ENCODE measurements at regions of chr10 and their contacts with region 1.

Region 1: GRCh38 chr10:48981310-48981907 is 41.8 kb upstream of the LRRC18 start:
- DNase-seq: peak in 6 of 10 donors; percentile 20 to 68 (median 48)
- H3K4me3 ChIP-seq: no peak overlapping the region
- H3K27ac ChIP-seq: no peak overlapping the region
- H3K27me3 ChIP-seq: no peaks in the 10 kb centered on the region
- CTCF ChIP-seq: peak; percentile 41 to 91 (median 80)

Region 2: GRCh38 chr10:49115015-49115795 is 133.8 kb after region 1 on chr10 and contains the start of gene VSTM4:
- intact Hi-C with region 1: loop called in 1 of 2 experiments (anchors 2 kb)
- DNase-seq: peak in 5 of 10 donors; percentile 27 to 71 (median 41)
- H3K4me3 ChIP-seq: peak within 1 kb of the TSS; percentile 49 to 83 (median 69)
- H3K27ac ChIP-seq: peak within 1 kb of the TSS in 54 of 59 donors; percentile 1 to 86 (median 72)
- H3K27me3 ChIP-seq: no peaks in the 10 kb centered on the region
- CTCF ChIP-seq: peak in 22 of 56 donors; percentile 7 to 45 (median 16)
- total RNA-seq, gene VSTM4: 7.3 to 17.4 (median 11.3) TPM

Region 3: GRCh38 chr10:49164559-49165188 is 183.3 kb after region 1 on chr10:
- intact Hi-C with region 1: loop called (anchors 5 kb)
- DNase-seq: no peak
- H3K4me3 ChIP-seq: no peak overlapping the region
- H3K27ac ChIP-seq: peak overlapping the region in 4 of 59 donors; percentile 54 to 75 (median 68)
- H3K27me3 ChIP-seq: no peaks in the 10 kb centered on the region
- CTCF ChIP-seq: peak in 52 of 56 donors; percentile 23 to 69 (median 50)

Region 4: GRCh38 chr10:49177391-49178355 is 196.3 kb after region 1 on chr10:
- intact Hi-C with region 1: loop called in 1 of 2 experiments (anchors 5 kb)
- DNase-seq: peak in 5 of 10 donors; percentile 49 to 72 (median 61)
- H3K4me3 ChIP-seq: no peak overlapping the region
- H3K27ac ChIP-seq: peak overlapping the region in 51 of 59 donors; percentile 8 to 86 (median 68)
- H3K27me3 ChIP-seq: no peaks in the 10 kb centered on the region
- CTCF ChIP-seq: no peak

Region 5: GRCh38 chr10:49218480-49218879 is 237.1 kb after region 1 on chr10:
- intact Hi-C with region 1: no loop called
- DNase-seq: no peak
- H3K4me3 ChIP-seq: no peak overlapping the region
- H3K27ac ChIP-seq: no peak overlapping the region
- H3K27me3 ChIP-seq: peaks cover 0 to 10% (median 0%) of the 10 kb centered on the region in 45 donors
- CTCF ChIP-seq: no peak